Mammary epithelial cell (primary cell): ENCODE measurements at regions of chr2 and their contacts with region 1.

Region 1: GRCh38 chr2:19649785-19650380 is 251.9 kb downstream of the TTC32 start:
- DNase-seq: peak; percentile 99
- H3K4me3 ChIP-seq: no peak overlapping the region
- H3K27ac ChIP-seq: peak overlapping the region; percentile 85
- H3K4me1 ChIP-seq: peaks cover 50% of the 10 kb centered on the region
- H3K27me3 ChIP-seq: no peaks in the 10 kb centered on the region
- CTCF ChIP-seq: no peak

Region 2: DNA sequence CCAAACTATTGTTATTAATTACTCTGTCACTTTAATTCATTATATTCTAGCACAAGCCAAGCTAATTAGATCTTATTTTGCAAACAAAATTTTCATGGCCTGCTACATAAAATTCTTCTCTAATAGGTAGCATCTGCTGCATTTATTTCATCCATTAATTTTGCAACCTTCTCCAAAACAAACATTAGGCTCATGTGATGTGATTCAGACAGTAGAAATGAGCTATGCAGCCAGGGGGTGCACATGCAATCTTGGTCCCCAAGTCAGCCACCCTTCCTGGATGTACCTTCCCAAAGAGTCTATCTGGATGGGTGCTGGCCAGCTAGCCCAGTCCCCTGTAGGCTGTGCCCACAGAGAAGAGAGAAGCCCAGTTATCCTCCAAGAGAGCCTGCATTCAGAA is 49.4 kb before region 1 on chr2:
- CTCF ChIA-PET with region 1: no interaction called
- dilution Hi-C with region 1: no loop called
- in situ Hi-C with region 1: no loop called
- intact Hi-C with region 1: no loop called
- DNase-seq: no peak
- H3K4me3 ChIP-seq: no peak overlapping the region
- H3K27ac ChIP-seq: no peak overlapping the region
- H3K4me1 ChIP-seq: no peaks in the 10 kb centered on the region
- H3K27me3 ChIP-seq: no peaks in the 10 kb centered on the region
- CTCF ChIP-seq: no peak

Region 3: DNA sequence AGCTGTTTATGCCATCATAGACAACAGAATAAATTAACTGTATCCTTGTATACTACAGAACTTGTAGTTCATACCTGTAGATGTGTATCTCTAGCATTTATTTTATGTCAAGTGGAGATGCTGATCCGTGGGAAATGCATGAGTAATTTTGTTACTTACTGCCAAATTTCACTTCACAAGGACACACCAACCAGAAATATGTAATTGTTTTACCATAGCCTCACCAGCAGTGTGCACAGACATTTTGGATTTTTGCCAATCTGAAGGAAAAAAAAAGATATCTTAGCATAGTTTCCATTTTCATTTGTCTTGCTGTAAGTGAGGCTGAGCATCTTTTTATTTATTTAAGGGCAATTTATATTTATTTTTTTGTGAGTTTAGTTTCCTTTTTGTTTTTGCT is 26.4 kb before region 1 on chr2:
- CTCF ChIA-PET with region 1: no interaction called
- dilution Hi-C with region 1: no loop called
- in situ Hi-C with region 1: no loop called
- intact Hi-C with region 1: loop called (anchors 1 kb)
- DNase-seq: peak; percentile 90
- H3K4me3 ChIP-seq: no peak overlapping the region
- H3K27ac ChIP-seq: peak overlapping the region; percentile 60
- H3K4me1 ChIP-seq: peaks cover 9% of the 10 kb centered on the region
- H3K27me3 ChIP-seq: no peaks in the 10 kb centered on the region
- CTCF ChIP-seq: no peak